Activated CD4-positive, alpha-beta T cell treated with anti-CD3 and anti-CD28 coated beads, Interleukin-2, amount 10 ng/mL, durations not matched to agents 24 days and 14 days (primary cell): ENCODE measurements at regions of chr11 and their contacts with region 1.

Region 1: DNA sequence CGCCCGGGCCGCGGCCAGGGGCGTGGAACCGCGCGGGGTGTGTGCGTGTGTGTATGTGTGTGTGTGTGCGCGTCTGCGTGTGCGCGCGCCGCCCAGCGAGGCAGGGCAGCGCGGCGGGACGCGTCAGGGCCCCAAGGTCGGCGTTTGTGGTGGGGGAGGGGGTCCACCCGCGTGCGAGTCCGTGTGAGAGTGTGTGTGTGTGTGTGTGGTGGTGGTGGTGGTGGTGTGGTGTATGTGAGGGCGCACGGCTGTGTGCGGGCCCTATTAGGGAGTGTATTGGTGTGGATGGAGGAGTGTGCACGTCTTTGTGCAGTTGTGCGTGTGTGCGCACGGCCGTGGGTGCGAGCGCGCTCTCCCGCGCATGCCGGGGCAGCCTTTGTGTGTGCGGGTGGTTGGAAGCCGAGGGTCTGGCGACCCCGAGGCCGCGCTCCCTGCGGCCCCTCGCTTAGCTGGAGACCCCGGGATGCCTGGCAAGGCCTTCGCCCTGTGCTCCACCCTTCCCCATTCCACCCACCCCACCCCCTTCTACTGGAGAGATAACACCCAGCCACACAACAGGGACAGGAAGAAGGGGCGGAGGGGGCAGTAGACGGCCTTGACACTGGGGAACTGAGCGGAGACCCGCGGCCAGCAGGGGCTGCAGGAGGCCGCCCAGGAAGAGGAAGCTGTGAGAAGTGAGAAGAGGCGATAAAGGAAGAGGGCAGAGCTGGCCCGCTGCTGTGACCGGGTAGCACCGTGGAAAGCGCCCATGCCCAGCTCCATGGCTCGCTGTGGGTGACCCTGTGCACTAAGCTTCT is 528 bp upstream of the ARRB1 start:
- DNase-seq: peak; percentile 91
- H3K4me3 Mint-ChIP-seq: peak overlapping the region; percentile 90
- H3K27ac Mint-ChIP-seq: peak overlapping the region; percentile 89
- H3K4me1 Mint-ChIP-seq: peaks cover 53% of the 10 kb centered on the region
- H3K27me3 Mint-ChIP-seq: no peaks in the 10 kb centered on the region

Region 2: DNA sequence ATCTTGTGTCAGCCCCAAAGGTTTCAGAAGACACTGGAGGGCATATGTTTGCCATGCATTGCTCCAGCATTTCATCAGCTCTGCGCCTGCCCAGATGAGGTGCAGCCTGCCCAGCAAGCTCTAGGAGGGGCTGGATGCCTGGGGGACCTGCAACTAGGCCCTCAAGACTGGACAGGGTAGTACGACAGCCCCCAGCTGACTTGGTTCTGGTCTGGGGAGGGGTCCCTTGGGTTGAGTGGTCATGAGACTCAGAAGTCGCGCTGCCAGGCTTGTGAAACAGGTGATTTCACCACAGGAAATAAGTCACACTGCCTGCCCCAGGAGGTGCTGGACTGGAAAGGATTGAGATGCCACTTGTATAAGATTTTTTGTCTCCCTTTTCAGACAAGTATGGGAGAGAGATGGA is 88.0 kb before region 1 on chr11:
- intact Hi-C with region 1: no loop called
- DNase-seq: no peak
- H3K4me3 Mint-ChIP-seq: no peak overlapping the region
- H3K27ac Mint-ChIP-seq: no peak overlapping the region
- H3K4me1 Mint-ChIP-seq: peaks cover 20% of the 10 kb centered on the region
- H3K27me3 Mint-ChIP-seq: peaks cover 2% of the 10 kb centered on the region

Region 3: GRCh38 chr11:75340050-75340409 is 12.0 kb before region 1 on chr11:
- intact Hi-C with region 1: loop called (anchors 1 kb)
- DNase-seq: no peak
- H3K4me3 Mint-ChIP-seq: peak overlapping the region; percentile 65
- H3K27ac Mint-ChIP-seq: peak overlapping the region; percentile 80
- H3K4me1 Mint-ChIP-seq: peaks cover 73% of the 10 kb centered on the region
- H3K27me3 Mint-ChIP-seq: no peaks in the 10 kb centered on the region